ENCODE measurements at regions of chr9 and their contacts with region 1.

Region 1: GRCh38 chr9:92764988-92765936 is 629 bp upstream of the BICD2 start:
- DNase-seq: peak; percentile 91
- H3K4me3 ChIP-seq: peak overlapping the region; percentile 79 to 88
- H3K27ac ChIP-seq: peak overlapping the region; percentile 97 to 98
- H3K4me1 ChIP-seq: peaks cover 9 to 38% of the 10 kb centered on the region in 2 experiments; a peak in 2 of 4 replicates
- H3K27me3 ChIP-seq: no peaks in the 10 kb centered on the region
- CTCF ChIP-seq: peak; percentile 97
- EP300 ChIP-seq: no peak
- RAD21 ChIP-seq: peak; percentile 52

Region 2: DNA sequence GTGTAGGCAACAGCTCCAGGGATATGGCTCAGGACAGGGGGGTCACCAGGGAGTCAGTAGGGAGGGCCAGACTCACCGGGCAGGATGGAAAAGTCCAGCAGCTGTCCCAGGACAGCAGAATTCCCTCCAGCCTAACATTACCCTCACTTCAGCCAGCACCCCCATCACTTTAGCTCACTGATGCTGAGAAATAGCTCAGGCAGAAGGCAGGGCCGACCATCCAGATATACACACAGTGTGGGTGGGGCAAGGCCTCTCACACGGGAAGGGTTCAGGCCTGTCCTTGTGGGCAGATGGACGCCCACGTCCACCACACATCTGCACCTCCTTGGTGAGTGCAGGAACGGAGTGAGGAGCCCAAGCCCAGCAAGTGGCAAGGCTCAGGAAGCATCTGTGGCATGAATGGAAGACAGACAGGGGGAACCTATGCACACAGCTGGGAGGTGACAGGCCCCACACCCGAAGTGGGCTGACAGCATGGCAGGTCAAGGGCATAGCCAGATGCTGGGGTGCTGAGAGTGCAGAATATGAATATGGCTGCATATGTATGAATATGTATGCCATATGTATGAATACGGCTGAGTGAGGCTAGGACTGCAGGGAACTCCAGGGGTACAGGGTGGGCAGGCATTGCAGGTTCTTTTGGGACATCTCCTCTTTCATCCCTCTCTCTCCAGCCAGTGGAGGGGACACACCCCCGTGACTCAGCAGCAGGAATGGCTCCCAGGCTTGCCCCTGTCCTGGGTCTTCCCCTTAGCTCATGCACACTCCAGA is 17.6 kb before region 1 on chr9:
- CTCF ChIA-PET with region 1: interaction called, 17 read pairs
- POLR2A ChIA-PET with region 1: interaction called, 4 read pairs
- DNase-seq: no peak
- H3K4me3 ChIP-seq: no peak overlapping the region
- H3K27ac ChIP-seq: no peak overlapping the region; a peak in 1 of 4 replicates
- H3K4me1 ChIP-seq: peaks cover 0 to 43% of the 10 kb centered on the region in 2 experiments; a peak in 2 of 4 replicates
- H3K27me3 ChIP-seq: no peaks in the 10 kb centered on the region
- CTCF ChIP-seq: no peak
- EP300 ChIP-seq: no peak
- RAD21 ChIP-seq: no peak